ENCODE measurements at regions of chr2 and their contacts with region 1.

Region 1: DNA sequence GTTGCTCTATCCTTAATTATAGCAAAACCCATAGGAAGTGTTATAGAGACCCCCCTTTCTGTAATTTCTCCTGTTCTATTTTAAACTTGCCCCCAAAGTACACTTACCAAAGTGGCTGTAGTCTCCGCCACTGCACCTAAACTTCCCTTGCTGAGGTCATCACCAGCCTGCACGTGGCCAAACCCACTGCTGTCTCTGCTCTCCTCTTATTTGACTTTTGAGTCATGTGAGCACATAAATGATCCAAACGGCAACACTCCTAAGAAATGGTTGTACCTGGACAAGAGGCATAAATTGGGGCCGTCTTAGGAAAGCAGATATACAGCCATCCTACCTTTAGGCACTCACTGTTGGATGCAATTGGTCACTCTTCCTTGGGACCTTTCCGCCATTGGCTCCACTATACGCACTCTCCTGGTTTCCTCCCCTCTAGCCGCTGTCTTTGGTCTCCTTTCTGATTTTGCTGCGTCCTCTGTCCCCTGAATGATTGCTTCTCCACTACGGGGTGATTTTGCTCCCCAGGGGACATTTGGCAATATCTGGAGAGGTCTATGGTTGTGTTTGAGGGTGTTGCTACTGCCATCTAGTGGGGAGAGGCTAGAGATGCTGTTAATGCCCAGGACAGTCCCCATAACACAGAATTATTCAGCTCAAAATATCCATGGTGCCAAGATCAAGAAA is 19.2 kb upstream of the IL36G start:
- DNase-seq: no peak
- ATAC-seq: peak; percentile 96
- H3K4me3 ChIP-seq: no peak overlapping the region
- H3K27ac ChIP-seq: no peak overlapping the region
- H3K4me1 ChIP-seq: no peaks in the 10 kb centered on the region
- H3K27me3 ChIP-seq: peaks cover 0 to 5% of the 10 kb centered on the region in 2 experiments; a peak in 3 of 4 replicates
- CTCF ChIP-seq: peak; percentile 83 to 87 (median 86)
- EP300 ChIP-seq: no peak
- POLR2A ChIP-seq: no peak
- RAD21 ChIP-seq: peak; percentile 68

Region 2: DNA sequence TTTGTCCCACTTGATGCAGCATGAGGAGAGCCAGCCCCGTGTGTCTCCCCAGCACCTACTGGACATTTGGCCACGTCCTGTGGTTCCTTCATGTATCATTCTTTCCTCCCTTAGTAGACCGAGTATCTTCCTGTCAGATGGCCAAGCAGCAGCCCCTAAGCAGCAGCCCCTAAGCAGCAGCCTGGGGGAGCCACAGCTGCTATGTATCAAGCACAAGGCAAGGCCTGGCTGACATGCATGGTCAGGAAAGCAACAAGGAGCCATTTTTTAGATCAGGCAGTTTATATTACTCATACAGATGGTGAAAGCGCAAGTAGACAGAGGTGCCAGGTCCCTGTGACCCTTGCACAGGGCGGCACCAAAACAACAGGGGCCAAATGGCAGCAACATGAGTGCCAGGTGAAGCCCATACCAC is 352.1 kb before region 1 on chr2:
- CTCF ChIA-PET with region 1: no interaction called
- POLR2A ChIA-PET with region 1: no interaction called
- RAD21 ChIA-PET with region 1: no interaction called
- SMC1A ChIA-PET with region 1: interaction called, 3 read pairs
- in situ Hi-C with region 1: loop called (anchors 10 kb)
- intact Hi-C with region 1: loop called (anchors 5 kb)
- DNase-seq: no peak
- ATAC-seq: peak; percentile 20; the same call in 1 of the 3 replicates
- H3K4me3 ChIP-seq: no peak overlapping the region
- H3K27ac ChIP-seq: no peak overlapping the region
- H3K4me1 ChIP-seq: no peaks in the 10 kb centered on the region
- H3K27me3 ChIP-seq: no peaks in the 10 kb centered on the region
- CTCF ChIP-seq: no peak
- EP300 ChIP-seq: no peak
- POLR2A ChIP-seq: no peak
- RAD21 ChIP-seq: no peak

Region 3: GRCh38 chr2:112614201-112614840 is 344.2 kb before region 1 on chr2:
- CTCF ChIA-PET with region 1: no interaction called
- POLR2A ChIA-PET with region 1: no interaction called
- RAD21 ChIA-PET with region 1: no interaction called
- SMC1A ChIA-PET with region 1: no interaction called
- in situ Hi-C with region 1: loop called (anchors 10 kb)
- intact Hi-C with region 1: no loop called
- DNase-seq: no peak
- ATAC-seq: no peak
- H3K4me3 ChIP-seq: no peak overlapping the region
- H3K27ac ChIP-seq: no peak overlapping the region
- H3K4me1 ChIP-seq: no peaks in the 10 kb centered on the region
- H3K27me3 ChIP-seq: peaks cover 0 to 2% of the 10 kb centered on the region in 2 experiments; a peak in 2 of 4 replicates
- CTCF ChIP-seq: no peak
- EP300 ChIP-seq: no peak
- POLR2A ChIP-seq: no peak
- RAD21 ChIP-seq: no peak

Region 4: GRCh38 chr2:112980537-112980936 is 22.0 kb after region 1 on chr2:
- CTCF ChIA-PET with region 1: interaction called, 10 read pairs
- POLR2A ChIA-PET with region 1: no interaction called
- RAD21 ChIA-PET with region 1: interaction called, 3 read pairs
- SMC1A ChIA-PET with region 1: interaction called, 6 read pairs
- in situ Hi-C with region 1: no loop called
- intact Hi-C with region 1: no loop called
- DNase-seq: no peak
- ATAC-seq: no peak
- H3K4me3 ChIP-seq: no peak overlapping the region
- H3K27ac ChIP-seq: no peak overlapping the region
- H3K4me1 ChIP-seq: peaks cover 8% of the 10 kb centered on the region; the same call in 1 of the 2 replicates
- H3K27me3 ChIP-seq: no peaks in the 10 kb centered on the region; a peak in 1 of 4 replicates
- CTCF ChIP-seq: no peak
- EP300 ChIP-seq: no peak
- POLR2A ChIP-seq: no peak
- RAD21 ChIP-seq: no peak

Measured in GM12878 (cell line).